AG04450 (cell line): ENCODE measurements at regions of chr15 and their contacts with region 1.

Region 1: GRCh38 chr15:62782039-62782791 is 260.3 kb upstream of the TPM1 start:
- DNase-seq: peak; percentile 59
- H3K4me3 ChIP-seq: no peak overlapping the region
- H3K27ac ChIP-seq: peak overlapping the region; percentile 31
- H3K27me3 ChIP-seq: no peaks in the 10 kb centered on the region
- CTCF ChIP-seq: peak; percentile 75

Region 2: DNA sequence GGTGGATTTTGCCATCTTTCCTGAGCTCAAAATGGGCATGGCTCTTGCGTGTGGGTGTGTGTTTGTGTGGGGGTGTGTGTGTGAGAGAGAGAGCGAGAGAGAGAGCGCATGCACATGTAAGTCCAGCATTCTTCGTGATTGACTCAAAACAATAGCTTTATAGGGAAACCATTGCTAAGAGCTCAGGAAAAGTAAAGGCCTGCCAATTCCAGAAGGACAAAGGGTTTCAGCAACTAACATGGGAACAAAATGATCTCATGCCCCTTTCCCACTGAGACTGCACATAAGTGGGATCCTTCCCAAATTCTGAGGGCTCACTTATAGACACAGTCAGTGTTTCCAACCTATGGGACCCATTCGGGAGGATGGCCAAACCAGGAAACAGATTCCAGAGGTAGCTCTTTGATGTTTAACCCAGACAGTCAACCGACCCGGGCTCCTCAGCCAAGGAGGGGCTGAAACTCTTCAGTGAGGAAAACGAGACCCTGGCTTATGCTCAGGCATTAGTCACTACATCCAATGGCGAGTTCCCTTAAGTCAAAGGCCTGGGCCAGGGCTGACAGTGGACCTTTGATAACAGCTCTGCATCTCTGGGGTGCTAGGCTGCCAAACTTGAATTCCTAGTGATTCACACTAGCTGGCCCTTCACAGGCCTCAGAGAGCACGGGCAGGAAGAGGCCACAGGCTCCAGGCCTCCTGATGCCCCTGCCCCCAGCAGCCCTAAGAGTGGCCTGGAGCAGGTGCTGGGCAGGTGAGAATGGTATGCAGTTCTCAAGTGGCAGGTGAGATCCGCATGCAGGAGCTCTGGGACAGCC is 312.1 kb before region 1 on chr15:
- CTCF ChIA-PET with region 1: no interaction called
- POLR2A ChIA-PET with region 1: no interaction called
- DNase-seq: peak; percentile 54
- H3K4me3 ChIP-seq: no peak overlapping the region
- H3K27ac ChIP-seq: peak overlapping the region; percentile 92
- H3K27me3 ChIP-seq: no peaks in the 10 kb centered on the region
- CTCF ChIP-seq: no peak

Region 3: DNA sequence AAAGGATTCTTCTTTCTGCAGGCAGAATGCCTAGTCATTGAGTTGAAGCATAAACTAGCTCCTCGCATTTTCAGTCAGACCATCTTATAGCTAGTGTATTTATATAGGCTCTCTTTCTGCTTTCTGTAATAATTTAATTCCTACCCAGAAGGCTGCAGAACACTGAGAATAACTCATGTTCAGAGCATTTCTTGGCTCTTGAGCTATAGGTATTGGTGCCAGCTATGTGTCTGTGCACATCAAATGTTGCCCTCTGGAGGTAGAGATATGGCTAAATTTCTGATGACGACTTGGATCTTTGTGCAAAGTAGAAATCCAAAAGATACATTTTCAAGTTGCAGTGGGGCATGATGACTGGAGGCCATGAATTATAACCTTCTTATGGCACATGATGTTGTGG is 75.9 kb before region 1 on chr15:
- CTCF ChIA-PET with region 1: no interaction called
- POLR2A ChIA-PET with region 1: no interaction called
- DNase-seq: no peak
- H3K4me3 ChIP-seq: no peak overlapping the region
- H3K27ac ChIP-seq: no peak overlapping the region
- H3K27me3 ChIP-seq: no peaks in the 10 kb centered on the region
- CTCF ChIP-seq: no peak

Region 4: DNA sequence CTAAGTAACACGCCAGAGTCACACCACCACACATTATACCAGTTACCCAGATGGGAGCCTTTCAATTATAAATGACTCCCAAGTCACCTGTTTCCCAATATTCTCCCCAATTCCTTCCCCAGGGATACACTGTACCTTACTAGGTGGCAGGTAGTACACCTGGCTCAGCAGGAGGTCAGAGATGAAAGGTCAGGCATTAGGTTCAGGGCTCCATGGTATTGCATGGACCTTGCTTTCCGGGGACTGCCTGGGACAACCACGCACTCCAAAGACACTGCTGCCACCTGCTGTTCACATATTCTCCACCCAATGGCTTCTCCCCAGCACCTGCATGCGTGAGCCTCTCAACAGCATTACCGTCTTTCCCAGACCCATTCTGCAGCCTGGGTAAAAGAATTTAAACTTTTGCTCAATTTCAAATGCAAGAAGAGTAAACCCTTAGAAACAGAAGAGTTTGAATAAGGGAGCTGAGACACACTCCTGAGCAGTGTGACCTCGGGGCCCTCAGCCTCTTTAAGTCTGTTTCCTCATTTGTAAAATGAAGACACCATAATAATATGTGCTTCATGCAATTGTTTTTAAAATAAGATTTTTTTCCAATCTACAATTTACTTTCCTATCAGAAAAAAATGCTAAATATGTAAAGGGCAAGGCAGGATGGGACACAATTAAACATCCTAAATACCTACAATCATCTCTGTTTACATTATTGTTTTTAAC is 311.4 kb after region 1 on chr15:
- CTCF ChIA-PET with region 1: interaction called, 11 read pairs
- POLR2A ChIA-PET with region 1: no interaction called
- DNase-seq: peak; percentile 52
- H3K4me3 ChIP-seq: no peak overlapping the region
- H3K27ac ChIP-seq: peak overlapping the region; percentile 40
- H3K27me3 ChIP-seq: no peaks in the 10 kb centered on the region
- CTCF ChIP-seq: peak; percentile 89